B cell (primary cell): ENCODE measurements at regions of chr12 and their contacts with region 1.

Region 1: DNA sequence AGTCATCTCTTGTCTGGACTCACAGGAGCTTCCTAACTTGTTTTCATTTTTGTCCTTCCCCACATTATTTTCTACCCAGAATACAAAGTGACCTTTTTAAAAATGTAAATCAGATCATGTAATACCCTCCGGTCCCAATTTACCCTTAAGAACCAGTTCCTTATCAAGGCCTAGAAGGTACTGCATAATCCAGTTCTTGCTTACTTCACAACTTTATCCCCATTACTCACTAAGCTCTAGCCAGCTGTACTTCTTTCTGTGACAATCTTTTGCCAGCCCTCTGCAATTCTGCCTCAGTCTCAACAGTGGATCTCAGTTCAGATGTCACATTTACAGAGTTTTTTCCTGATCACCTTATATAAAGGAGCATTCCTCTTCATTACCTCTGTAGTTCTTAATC is 11.6 kb downstream of the RAP1B start:
- DNase-seq: no peak
- ATAC-seq: peak; percentile 31
- H3K4me3 ChIP-seq: no peak overlapping the region
- H3K4me3 Mint-ChIP-seq: peak overlapping the region; percentile 53
- H3K27ac ChIP-seq: peak overlapping the region in 1 of 2 donors; percentile 48
- H3K27ac Mint-ChIP-seq: peak overlapping the region; percentile 59
- H3K4me1 ChIP-seq: peaks cover 45 to 60% of the 10 kb centered on the region in 2 donors
- H3K4me1 Mint-ChIP-seq: peaks cover 77% of the 10 kb centered on the region
- H3K27me3 ChIP-seq: no peaks in the 10 kb centered on the region
- H3K27me3 Mint-ChIP-seq: no peaks in the 10 kb centered on the region
- CTCF ChIP-seq: no peak

Region 2: GRCh38 chr12:68572661-68573060 is 49.6 kb before region 1 on chr12:
- CTCF ChIA-PET with region 1: no interaction called
- POLR2A ChIA-PET with region 1: no interaction called
- intact Hi-C with region 1: no loop called
- DNase-seq: no peak
- ATAC-seq: no peak
- H3K4me3 ChIP-seq: no peak overlapping the region
- H3K4me3 Mint-ChIP-seq: no peak overlapping the region
- H3K27ac ChIP-seq: no peak overlapping the region
- H3K27ac Mint-ChIP-seq: no peak overlapping the region
- H3K4me1 ChIP-seq: no peaks in the 10 kb centered on the region
- H3K4me1 Mint-ChIP-seq: peaks cover 4% of the 10 kb centered on the region
- H3K27me3 ChIP-seq: no peaks in the 10 kb centered on the region
- H3K27me3 Mint-ChIP-seq: no peaks in the 10 kb centered on the region
- CTCF ChIP-seq: no peak

Region 3: DNA sequence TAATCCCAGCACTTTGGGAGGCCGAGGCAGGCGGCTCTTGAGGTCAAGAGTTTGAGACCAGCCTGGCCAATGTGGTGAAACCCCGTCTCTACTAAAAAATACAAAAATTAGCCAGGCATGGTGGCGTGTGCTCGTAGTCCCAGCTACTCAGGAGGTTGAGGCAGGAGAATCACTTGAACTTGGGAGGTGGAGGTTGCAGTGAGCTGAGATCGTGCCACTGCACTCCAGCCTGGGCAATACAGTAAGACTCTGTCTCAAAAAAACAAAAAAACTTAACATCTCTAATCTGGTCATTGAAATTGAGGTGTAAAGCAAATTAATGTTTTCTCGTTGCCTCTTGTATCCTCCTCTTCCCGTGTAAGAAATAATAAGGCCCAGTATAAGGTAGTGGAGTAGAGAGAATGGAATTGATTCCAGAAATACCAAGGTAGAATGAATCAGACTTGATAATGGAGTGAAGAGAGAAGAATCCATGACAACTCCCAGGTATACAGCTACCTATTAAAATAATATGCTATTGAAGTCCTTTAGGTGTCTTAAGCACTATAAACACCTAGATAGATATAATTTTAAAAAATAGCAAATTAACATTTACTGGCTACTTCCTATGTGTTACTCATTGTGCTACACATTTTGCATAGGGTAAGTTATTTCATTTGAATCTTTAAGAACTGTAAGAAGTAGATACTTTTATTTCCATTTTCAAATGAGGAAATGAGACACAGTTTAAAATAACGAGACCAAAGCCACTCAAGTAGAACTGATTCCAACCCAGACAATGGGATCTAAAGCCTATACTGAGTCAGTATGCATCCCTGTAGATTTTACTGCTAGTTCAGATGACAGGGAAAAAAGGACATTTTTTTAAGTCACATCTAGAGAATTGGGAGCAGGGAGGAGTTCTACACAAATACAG is 11.6 kb after region 1 on chr12:
- CTCF ChIA-PET with region 1: interaction called, 3 read pairs
- POLR2A ChIA-PET with region 1: no interaction called
- intact Hi-C with region 1: loop called (anchors 1 kb)
- DNase-seq: peak; percentile 55
- ATAC-seq: peak; percentile 59
- H3K4me3 ChIP-seq: peak overlapping the region in 1 of 5 experiments; percentile 28
- H3K4me3 Mint-ChIP-seq: peak overlapping the region; percentile 62
- H3K27ac ChIP-seq: peak overlapping the region; percentile 37 to 59
- H3K27ac Mint-ChIP-seq: peak overlapping the region; percentile 62
- H3K4me1 ChIP-seq: peaks cover 63 to 77% of the 10 kb centered on the region in 2 donors
- H3K4me1 Mint-ChIP-seq: peaks cover 84% of the 10 kb centered on the region
- H3K27me3 ChIP-seq: no peaks in the 10 kb centered on the region
- H3K27me3 Mint-ChIP-seq: no peaks in the 10 kb centered on the region
- CTCF ChIP-seq: no peak